Thyroid gland (tissue), 4 donors: ENCODE measurements at regions of chr7 and their contacts with region 1.

Region 1: DNA sequence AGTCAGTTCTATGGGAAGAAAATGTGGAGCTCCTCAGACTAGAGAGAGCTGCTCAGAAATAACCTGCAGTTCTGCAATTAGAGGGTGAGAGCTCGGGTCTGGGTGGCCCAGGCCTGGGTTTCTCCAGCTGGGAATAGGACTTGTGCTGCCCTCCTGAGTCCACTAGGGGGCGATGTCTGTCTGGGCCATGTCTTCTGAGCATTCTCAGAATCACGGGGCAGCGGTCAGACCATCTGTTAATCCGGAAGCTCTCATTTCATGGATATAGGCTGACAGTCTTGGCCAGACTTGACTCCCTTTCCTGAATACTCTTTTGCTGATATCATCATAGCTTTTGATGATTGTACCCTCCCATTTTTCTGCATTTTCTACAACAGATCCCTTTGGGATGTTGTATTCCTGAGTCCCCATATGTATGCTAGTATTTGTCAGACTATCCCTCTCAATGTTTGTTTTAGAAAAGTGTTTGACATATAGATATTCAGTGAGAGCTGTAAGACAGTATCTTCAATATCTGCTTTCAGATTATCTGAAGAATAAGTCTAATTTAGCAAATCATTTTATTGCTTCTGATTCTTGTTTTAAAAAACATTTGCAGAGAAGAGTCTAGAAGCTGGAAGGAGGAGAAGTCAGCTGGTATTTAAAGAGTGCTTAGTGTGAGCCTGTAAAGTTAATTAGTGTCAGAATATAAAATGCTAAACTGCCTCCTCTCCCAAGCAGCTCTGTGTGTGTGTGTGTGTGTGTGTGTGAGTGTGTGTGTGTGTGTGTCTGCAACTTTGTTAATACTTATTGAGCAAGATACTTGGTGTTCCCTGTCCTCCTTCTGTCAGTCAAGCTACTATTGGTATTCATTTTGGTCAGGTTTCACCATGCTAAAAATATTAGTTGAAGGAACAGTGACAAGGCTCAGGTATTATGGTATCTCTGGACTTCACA is 38.0 kb downstream of the STARD3NL start:
- DNase-seq: peak; percentile 76 to 83
- H3K4me3 ChIP-seq: no peak overlapping the region
- H3K27ac ChIP-seq: no peak overlapping the region
- H3K4me1 ChIP-seq: peaks cover 11 to 15% of the 10 kb centered on the region in 2 donors
- H3K27me3 ChIP-seq: no peaks in the 10 kb centered on the region
- CTCF ChIP-seq: peak; percentile 73 to 96 (median 90)
- POLR2A ChIP-seq: no peak

Region 2: DNA sequence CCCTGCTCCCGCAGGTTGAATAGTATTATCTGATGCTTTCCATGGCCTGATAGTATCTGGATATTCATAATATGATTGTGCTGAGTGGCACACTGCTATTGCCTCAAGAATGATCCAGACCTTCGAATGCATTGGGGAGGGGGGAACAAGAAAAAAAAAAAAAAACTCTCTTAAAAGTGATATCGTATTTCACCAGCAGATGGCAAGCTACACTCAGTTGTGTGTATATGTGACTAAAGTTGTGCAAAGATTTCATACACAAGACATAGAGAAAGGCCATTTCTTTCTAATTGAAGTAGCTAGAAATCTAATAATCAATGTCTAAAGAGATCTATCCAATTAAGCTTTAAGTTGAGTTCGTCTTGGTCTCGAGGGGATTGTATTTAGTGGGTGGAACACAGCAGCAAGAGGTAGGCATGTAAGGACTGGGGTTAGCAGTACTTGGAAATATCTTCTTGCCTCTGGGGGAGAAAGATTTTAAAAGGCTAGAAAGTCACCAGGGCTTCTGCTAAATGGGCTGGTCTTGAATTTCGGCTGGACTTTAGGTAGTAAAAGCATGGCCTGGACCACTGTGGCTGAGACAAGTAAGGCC is 314.7 kb before region 1 on chr7:
- intact Hi-C with region 1: loop called (anchors 5 kb)
- DNase-seq: no peak
- H3K4me3 ChIP-seq: no peak overlapping the region
- H3K27ac ChIP-seq: peak overlapping the region in 2 of 3 donors; percentile 26 to 52
- H3K4me1 ChIP-seq: peaks cover 8 to 11% of the 10 kb centered on the region in 2 donors
- H3K27me3 ChIP-seq: no peaks in the 10 kb centered on the region
- CTCF ChIP-seq: peak; percentile 17 to 91 (median 58)
- POLR2A ChIP-seq: no peak

Region 3: DNA sequence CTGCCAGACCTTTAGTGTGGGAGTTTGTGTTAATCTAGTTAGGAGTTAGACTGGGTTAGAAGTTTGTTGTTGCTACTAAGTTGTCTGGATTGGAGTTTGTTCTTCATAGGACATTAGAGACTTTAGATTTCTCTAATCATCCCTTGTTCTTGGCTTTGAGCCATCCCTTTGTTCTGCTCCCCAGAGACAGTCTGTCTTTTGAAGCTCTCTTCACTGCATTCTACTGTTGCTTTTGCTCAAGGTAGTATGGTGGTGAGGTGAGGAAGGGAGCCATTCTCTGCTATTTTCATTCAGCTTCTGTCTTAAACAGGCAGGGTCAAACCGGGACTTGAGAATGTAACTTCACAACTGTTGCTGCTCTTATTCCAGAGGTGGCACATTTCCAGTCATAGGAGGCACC is 67.8 kb after region 1 on chr7:
- intact Hi-C with region 1: no loop called
- DNase-seq: no peak
- H3K4me3 ChIP-seq: no peak overlapping the region
- H3K27ac ChIP-seq: no peak overlapping the region
- H3K4me1 ChIP-seq: peaks cover 11 to 14% of the 10 kb centered on the region in 2 donors
- H3K27me3 ChIP-seq: no peaks in the 10 kb centered on the region
- CTCF ChIP-seq: no peak
- POLR2A ChIP-seq: no peak

Region 4: DNA sequence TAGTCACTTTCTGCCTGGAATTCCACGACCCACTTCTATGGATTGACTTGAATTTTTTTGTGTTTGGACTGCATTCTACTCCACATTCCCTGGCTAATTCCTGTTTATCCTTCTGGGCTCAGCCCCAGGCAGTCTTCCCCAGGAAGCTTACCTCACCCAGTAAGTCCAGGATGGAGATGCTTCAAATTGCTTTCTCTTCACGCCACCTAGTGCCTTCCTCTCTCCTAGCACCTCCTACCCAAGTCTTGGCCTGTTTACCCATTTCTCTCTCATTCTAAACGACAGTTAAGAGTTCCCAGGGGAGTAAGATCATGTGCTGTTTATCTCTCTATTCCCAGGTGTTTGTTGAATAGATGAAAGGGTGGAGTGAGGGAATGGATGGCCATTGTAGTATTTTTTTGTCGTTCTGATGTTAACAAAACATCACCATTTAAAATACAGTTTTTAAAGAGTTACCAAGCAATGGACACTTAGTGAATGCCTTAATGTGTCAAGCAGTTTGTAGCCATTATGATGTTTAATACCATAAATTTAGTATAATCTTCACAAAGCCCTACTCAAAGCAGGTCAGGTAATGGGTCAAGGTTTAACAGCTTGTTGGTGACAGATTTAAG is 102.9 kb after region 1 on chr7:
- intact Hi-C with region 1: loop called (anchors 10 kb)
- DNase-seq: peak; percentile 47 to 54
- H3K4me3 ChIP-seq: no peak overlapping the region
- H3K27ac ChIP-seq: no peak overlapping the region
- H3K4me1 ChIP-seq: no peaks in the 10 kb centered on the region
- H3K27me3 ChIP-seq: no peaks in the 10 kb centered on the region
- CTCF ChIP-seq: peak in 5 of 6 experiments; percentile 25 to 89 (median 65)
- POLR2A ChIP-seq: no peak